ENCODE measurements at regions of chr15 and their contacts with region 1.

Region 1: DNA sequence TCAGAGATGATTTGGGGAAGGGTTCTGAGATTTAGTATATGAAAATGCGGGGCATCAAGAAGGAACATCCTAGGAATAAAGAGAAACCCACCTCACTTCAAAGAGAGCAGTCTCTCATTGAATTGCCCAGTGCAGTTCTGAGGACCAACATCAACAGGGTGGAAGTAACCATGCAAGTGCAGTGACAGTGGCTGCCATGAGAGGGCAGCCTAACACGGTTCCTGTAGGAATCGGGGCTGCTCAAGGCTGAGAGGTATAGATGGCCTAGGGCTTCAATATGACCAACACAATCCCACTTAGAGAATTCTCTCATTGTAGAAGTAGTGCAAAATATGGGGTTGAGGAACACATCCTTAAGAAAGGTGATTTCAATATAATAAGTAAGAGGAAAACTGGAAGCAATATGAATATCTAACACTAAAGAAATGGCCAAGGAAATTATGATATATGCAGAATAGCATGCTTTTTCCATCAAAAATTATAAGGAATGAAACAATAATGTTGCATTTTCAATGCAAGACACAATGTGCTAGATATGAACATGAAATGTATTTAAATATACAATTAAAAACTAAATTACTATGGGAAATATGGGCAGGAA is 51.1 kb upstream of the ARRDC4 start:
- DNase-seq: peak in 4 of 5 donors; percentile 22 to 39 (median 34)
- H3K4me3 ChIP-seq: no peak overlapping the region
- H3K4me3 Mint-ChIP-seq: no peak overlapping the region
- H3K27ac ChIP-seq: no peak overlapping the region
- H3K27ac Mint-ChIP-seq: no peak overlapping the region
- H3K4me1 ChIP-seq: no peaks in the 10 kb centered on the region
- H3K4me1 Mint-ChIP-seq: peaks cover 0 to 2% (median under 1%) of the 10 kb centered on the region in 4 donors
- H3K27me3 ChIP-seq: no peaks in the 10 kb centered on the region
- H3K27me3 Mint-ChIP-seq: peaks cover 0 to 10% of the 10 kb centered on the region in 2 donors

Region 2: DNA sequence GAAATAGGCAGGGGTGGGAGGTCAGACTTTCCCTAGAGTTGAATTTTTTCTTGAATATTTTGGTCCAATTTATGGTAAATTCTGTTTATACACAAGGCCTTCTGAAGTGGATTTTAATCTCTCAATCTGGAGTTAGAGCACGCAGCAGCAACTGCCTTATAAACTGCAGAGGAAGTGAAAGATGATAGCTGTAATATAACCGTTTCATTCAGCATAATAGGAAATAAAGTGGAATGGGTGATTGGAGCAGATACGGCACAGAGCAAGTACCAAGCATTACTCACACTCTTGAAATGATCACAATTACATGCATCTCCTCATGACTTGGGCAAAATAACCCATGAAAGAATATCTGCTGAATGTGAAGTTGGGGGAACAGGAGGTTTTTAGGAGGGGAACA is 157.9 kb after region 1 on chr15:
- CTCF ChIA-PET with region 1: no interaction called
- POLR2A ChIA-PET with region 1: no interaction called
- intact Hi-C with region 1: no loop called
- DNase-seq: no peak
- H3K4me3 ChIP-seq: no peak overlapping the region
- H3K4me3 Mint-ChIP-seq: no peak overlapping the region
- H3K27ac ChIP-seq: no peak overlapping the region
- H3K27ac Mint-ChIP-seq: no peak overlapping the region
- H3K4me1 ChIP-seq: no peaks in the 10 kb centered on the region
- H3K4me1 Mint-ChIP-seq: no peaks in the 10 kb centered on the region
- H3K27me3 ChIP-seq: no peaks in the 10 kb centered on the region
- H3K27me3 Mint-ChIP-seq: no peaks in the 10 kb centered on the region

Region 3: DNA sequence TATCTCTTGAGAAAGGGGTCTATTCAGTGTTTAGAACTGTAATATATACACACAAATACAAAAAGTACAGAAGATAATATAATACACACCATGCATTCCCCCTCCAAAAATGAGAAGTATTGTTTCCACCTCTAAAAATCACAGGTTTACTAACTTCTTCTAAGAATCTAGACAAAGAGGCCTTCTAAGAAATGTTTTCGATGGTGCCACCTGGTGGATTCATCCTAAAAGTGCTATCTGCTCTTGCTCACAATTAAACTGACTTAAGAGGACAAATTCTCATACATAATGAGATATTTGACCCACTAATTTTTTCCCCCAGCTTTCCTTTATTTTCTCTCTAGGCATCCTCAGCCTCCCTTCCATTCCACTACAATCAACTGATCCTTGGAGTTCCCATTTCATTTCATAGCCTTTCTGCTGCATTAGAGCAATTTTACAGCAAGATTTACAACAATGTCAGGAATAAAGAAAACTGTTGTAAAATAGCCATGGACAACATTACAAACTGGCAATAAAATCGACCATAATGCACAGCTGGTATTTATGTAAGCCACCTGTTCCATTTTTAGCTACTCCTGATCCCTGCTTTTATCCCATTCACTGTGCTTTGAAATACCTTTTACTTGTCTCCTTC is 175.7 kb after region 1 on chr15:
- CTCF ChIA-PET with region 1: interaction called, 18 read pairs
- POLR2A ChIA-PET with region 1: no interaction called
- intact Hi-C with region 1: no loop called
- DNase-seq: peak in 4 of 5 donors; percentile 15 to 33 (median 21)
- H3K4me3 ChIP-seq: no peak overlapping the region
- H3K4me3 Mint-ChIP-seq: no peak overlapping the region
- H3K27ac ChIP-seq: no peak overlapping the region
- H3K27ac Mint-ChIP-seq: peak overlapping the region in 1 of 7 donors; percentile 1
- H3K4me1 ChIP-seq: no peaks in the 10 kb centered on the region
- H3K4me1 Mint-ChIP-seq: no peaks in the 10 kb centered on the region
- H3K27me3 ChIP-seq: no peaks in the 10 kb centered on the region
- H3K27me3 Mint-ChIP-seq: no peaks in the 10 kb centered on the region

Region 4: GRCh38 chr15:98177924-98178592 is 268.7 kb after region 1 on chr15:
- CTCF ChIA-PET with region 1: interaction called, 20 read pairs
- POLR2A ChIA-PET with region 1: no interaction called
- intact Hi-C with region 1: no loop called
- DNase-seq: peak in 4 of 5 donors; percentile 15 to 34 (median 25)
- H3K4me3 ChIP-seq: no peak overlapping the region
- H3K4me3 Mint-ChIP-seq: no peak overlapping the region
- H3K27ac ChIP-seq: no peak overlapping the region
- H3K27ac Mint-ChIP-seq: no peak overlapping the region
- H3K4me1 ChIP-seq: no peaks in the 10 kb centered on the region
- H3K4me1 Mint-ChIP-seq: peaks cover 0 to 12% (median 2%) of the 10 kb centered on the region in 4 donors
- H3K27me3 ChIP-seq: no peaks in the 10 kb centered on the region
- H3K27me3 Mint-ChIP-seq: peaks cover 6 to 8% of the 10 kb centered on the region in 2 donors

Region 5: GRCh38 chr15:98428253-98428989 is 519.0 kb after region 1 on chr15:
- CTCF ChIA-PET with region 1: no interaction called
- POLR2A ChIA-PET with region 1: no interaction called
- intact Hi-C with region 1: loop called (anchors 10 kb)
- DNase-seq: peak in 4 of 5 donors; percentile 33 to 43 (median 36)
- H3K4me3 ChIP-seq: no peak overlapping the region
- H3K4me3 Mint-ChIP-seq: peak overlapping the region; percentile 36 to 71 (median 63)
- H3K27ac ChIP-seq: no peak overlapping the region
- H3K27ac Mint-ChIP-seq: no peak overlapping the region
- H3K4me1 ChIP-seq: peaks cover 4% of the 10 kb centered on the region
- H3K4me1 Mint-ChIP-seq: peaks cover 2 to 10% (median 8%) of the 10 kb centered on the region in 4 donors
- H3K27me3 ChIP-seq: no peaks in the 10 kb centered on the region
- H3K27me3 Mint-ChIP-seq: peaks cover 26 to 30% of the 10 kb centered on the region in 2 donors

Measured in CD4-positive, alpha-beta memory T cell (primary cell).